ENCODE measurements at regions of chr15 and their contacts with region 1.

Region 1: GRCh38 chr15:71212146-71212545 is 96.9 kb downstream of the THSD4 start:
- DNase-seq: no peak
- H3K4me3 ChIP-seq: no peak overlapping the region
- H3K27ac ChIP-seq: no peak overlapping the region
- H3K4me1 ChIP-seq: no peaks in the 10 kb centered on the region
- H3K27me3 ChIP-seq: no peaks in the 10 kb centered on the region
- CTCF ChIP-seq: no peak

Region 2: GRCh38 chr15:71151081-71151480 is 61.1 kb before region 1 on chr15:
- CTCF ChIA-PET with region 1: no interaction called
- dilution Hi-C with region 1: no loop called
- in situ Hi-C with region 1: no loop called
- intact Hi-C with region 1: no loop called
- DNase-seq: peak; percentile 74
- H3K4me3 ChIP-seq: no peak overlapping the region
- H3K27ac ChIP-seq: peak overlapping the region; percentile 29
- H3K4me1 ChIP-seq: peaks cover 36% of the 10 kb centered on the region
- H3K27me3 ChIP-seq: no peaks in the 10 kb centered on the region
- CTCF ChIP-seq: no peak

Region 3: GRCh38 chr15:71301958-71302621 is 89.9 kb after region 1 on chr15:
- CTCF ChIA-PET with region 1: no interaction called
- dilution Hi-C with region 1: loop called (anchors 5 kb)
- in situ Hi-C with region 1: no loop called
- intact Hi-C with region 1: no loop called
- DNase-seq: no peak
- H3K4me3 ChIP-seq: no peak overlapping the region
- H3K27ac ChIP-seq: no peak overlapping the region
- H3K4me1 ChIP-seq: peaks cover 14% of the 10 kb centered on the region
- H3K27me3 ChIP-seq: no peaks in the 10 kb centered on the region
- CTCF ChIP-seq: no peak

Region 4: DNA sequence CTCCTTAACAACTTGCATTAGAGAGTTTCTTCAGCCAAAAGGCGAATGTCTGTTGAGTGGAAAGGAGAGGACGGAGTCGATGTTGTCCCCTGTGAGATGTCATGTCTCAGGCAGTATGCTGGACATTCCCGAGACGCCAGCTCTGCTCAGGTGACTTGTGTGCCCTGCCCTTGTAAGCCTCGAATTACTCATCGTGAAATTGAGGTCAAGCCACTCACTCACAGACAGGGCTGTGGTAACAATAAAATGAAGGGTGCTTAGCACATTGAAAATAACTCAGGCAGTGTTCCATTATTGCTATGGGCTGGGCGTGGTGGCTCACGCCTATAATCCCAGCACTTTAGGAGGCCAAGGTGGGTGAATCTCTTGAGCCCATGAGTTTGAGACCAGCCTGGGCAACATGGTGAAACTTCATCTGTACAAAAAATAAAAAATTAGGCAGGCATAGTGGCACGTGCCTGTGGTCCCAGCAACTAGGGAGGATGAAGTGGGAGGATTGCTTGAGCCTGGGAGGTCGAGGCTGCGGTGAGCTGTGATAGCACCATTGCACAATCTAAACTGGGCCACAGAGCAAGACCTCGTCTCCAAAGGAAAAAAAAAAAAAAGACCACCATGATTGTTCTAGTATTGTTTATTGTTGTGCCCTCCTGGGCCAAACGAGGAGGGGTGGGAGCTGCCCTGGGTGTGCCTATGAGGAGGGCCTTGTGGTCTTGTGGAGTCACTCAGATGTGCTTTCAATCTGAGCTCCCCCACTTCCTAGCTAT is 117.5 kb after region 1 on chr15:
- CTCF ChIA-PET with region 1: no interaction called
- dilution Hi-C with region 1: no loop called
- in situ Hi-C with region 1: no loop called
- intact Hi-C with region 1: no loop called
- DNase-seq: peak; percentile 91
- H3K4me3 ChIP-seq: no peak overlapping the region
- H3K27ac ChIP-seq: peak overlapping the region; percentile 59
- H3K4me1 ChIP-seq: peaks cover 32% of the 10 kb centered on the region
- H3K27me3 ChIP-seq: no peaks in the 10 kb centered on the region
- CTCF ChIP-seq: no peak